ENCODE measurements at regions of chr1 and their contacts with region 1.

Region 1: DNA sequence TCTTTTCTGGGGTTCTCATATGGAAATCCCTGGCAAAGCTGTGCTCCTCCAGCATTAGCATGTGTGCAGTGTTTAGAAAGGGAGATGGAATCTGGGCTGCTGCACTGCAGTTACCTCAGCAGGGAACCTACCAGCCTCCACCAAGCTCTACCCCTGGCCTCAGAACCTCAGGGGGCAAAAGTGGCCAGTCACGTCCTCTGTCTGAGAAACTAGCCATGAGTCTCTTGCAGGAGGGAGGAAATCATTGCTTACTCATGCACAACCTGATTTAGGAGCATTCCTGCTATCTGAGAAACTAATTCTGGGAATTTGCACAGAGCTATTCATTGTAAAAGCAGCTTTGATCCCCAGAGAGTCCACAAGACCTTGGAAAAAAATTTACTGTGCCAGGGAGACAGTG is 80.6 kb upstream of the IPO9 start:
- H3K4me3 Mint-ChIP-seq: no peak overlapping the region
- H3K27ac Mint-ChIP-seq: peak overlapping the region; percentile 61
- H3K4me1 Mint-ChIP-seq: peaks cover 29% of the 10 kb centered on the region
- H3K27me3 Mint-ChIP-seq: no peaks in the 10 kb centered on the region

Region 2: GRCh38 chr1:201709564-201710295 is 38.6 kb before region 1 on chr1:
- intact Hi-C with region 1: loop called (anchors 5 kb)
- H3K4me3 Mint-ChIP-seq: no peak overlapping the region
- H3K27ac Mint-ChIP-seq: no peak overlapping the region
- H3K4me1 Mint-ChIP-seq: peaks cover 48% of the 10 kb centered on the region
- H3K27me3 Mint-ChIP-seq: peaks cover 2% of the 10 kb centered on the region